ENCODE measurements at regions of chr6 and their contacts with region 1.

Region 1: DNA sequence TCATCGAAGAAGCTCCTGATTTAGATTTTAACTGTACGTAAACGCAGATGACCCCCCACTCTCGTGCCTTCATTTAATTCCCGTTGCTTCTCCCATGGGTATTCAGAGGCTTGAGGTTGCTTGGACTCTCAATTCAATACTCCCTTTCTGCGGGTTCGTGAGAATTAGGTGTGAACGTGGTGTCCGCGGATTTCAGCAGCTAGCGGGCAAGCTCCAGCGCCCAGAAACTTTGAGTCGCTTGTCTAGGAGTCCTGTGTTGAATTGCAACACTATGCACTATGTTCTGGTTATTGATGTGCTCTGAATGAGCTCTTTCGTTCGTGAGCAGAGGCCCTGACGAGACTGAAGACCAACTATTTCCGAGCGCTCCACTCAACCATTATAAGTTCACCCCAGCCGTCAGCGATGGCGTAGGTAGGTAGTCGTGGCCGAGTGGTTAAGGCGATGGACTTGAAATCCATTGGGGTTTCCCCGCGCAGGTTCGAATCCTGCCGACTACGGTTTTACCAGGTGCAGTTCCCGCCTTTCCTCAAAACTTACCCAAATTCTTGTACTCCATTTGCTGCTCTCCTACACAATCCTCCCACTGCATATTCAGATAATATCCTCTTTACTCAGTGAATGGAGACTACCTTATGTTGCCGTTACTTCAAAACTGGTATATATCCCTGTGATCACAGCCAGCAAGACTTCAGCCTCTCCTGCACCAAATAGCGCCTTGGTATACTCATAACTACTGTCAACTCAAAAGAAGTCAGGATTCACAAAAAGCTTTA is 72.6 kb upstream of the ZNF184 start:
- H3K4me3 ChIP-seq: peak overlapping the region; percentile 50
- H3K27ac ChIP-seq: peak overlapping the region; percentile 77
- H3K4me1 ChIP-seq: no peaks in the 10 kb centered on the region
- CTCF ChIP-seq: no peak

Region 2: GRCh38 chr6:27452496-27452897 is 93.0 kb before region 1 on chr6:
- CTCF ChIA-PET with region 1: no interaction called
- POLR2A ChIA-PET with region 1: no interaction called
- H3K4me3 ChIP-seq: no peak overlapping the region
- H3K27ac ChIP-seq: no peak overlapping the region
- H3K4me1 ChIP-seq: no peaks in the 10 kb centered on the region
- CTCF ChIP-seq: no peak

Region 3: GRCh38 chr6:27743818-27744217 is 198.4 kb after region 1 on chr6:
- CTCF ChIA-PET with region 1: no interaction called
- POLR2A ChIA-PET with region 1: interaction called, 10 read pairs
- H3K4me3 ChIP-seq: no peak overlapping the region
- H3K27ac ChIP-seq: no peak overlapping the region
- H3K4me1 ChIP-seq: no peaks in the 10 kb centered on the region
- CTCF ChIP-seq: no peak

Measured in HEK293 (cell line).